CD8-positive, alpha-beta T cell (primary cell): ENCODE measurements at regions of chr9 and their contacts with region 1.

Region 1: GRCh38 chr9:114405294-114406034 is 17.7 kb upstream of the AKNA start:
- DNase-seq: peak; percentile 65 to 91 (median 81)
- ATAC-seq: peak; percentile 99
- H3K4me3 ChIP-seq: no peak overlapping the region
- H3K4me3 Mint-ChIP-seq: no peak overlapping the region
- H3K27ac ChIP-seq: no peak overlapping the region
- H3K27ac Mint-ChIP-seq: peak overlapping the region; percentile 14
- H3K4me1 ChIP-seq: peaks cover 11% of the 10 kb centered on the region
- H3K4me1 Mint-ChIP-seq: peaks cover 7% of the 10 kb centered on the region
- H3K27me3 ChIP-seq: no peaks in the 10 kb centered on the region
- H3K27me3 Mint-ChIP-seq: no peaks in the 10 kb centered on the region
- CTCF ChIP-seq: peak; percentile 64

Region 2: GRCh38 chr9:114378883-114379282 is 26.6 kb before region 1 on chr9:
- CTCF ChIA-PET with region 1: interaction called, 10 read pairs
- POLR2A ChIA-PET with region 1: no interaction called
- intact Hi-C with region 1: no loop called
- DNase-seq: no peak
- ATAC-seq: no peak
- H3K4me3 ChIP-seq: peak overlapping the region in 1 of 2 experiments; percentile 16
- H3K4me3 Mint-ChIP-seq: peak overlapping the region; percentile 68
- H3K27ac ChIP-seq: peak overlapping the region; percentile 31 to 93
- H3K27ac Mint-ChIP-seq: peak overlapping the region; percentile 95
- H3K4me1 ChIP-seq: peaks cover 96% of the 10 kb centered on the region
- H3K4me1 Mint-ChIP-seq: peaks cover 86% of the 10 kb centered on the region
- H3K27me3 ChIP-seq: no peaks in the 10 kb centered on the region
- H3K27me3 Mint-ChIP-seq: no peaks in the 10 kb centered on the region
- CTCF ChIP-seq: no peak

Region 3: DNA sequence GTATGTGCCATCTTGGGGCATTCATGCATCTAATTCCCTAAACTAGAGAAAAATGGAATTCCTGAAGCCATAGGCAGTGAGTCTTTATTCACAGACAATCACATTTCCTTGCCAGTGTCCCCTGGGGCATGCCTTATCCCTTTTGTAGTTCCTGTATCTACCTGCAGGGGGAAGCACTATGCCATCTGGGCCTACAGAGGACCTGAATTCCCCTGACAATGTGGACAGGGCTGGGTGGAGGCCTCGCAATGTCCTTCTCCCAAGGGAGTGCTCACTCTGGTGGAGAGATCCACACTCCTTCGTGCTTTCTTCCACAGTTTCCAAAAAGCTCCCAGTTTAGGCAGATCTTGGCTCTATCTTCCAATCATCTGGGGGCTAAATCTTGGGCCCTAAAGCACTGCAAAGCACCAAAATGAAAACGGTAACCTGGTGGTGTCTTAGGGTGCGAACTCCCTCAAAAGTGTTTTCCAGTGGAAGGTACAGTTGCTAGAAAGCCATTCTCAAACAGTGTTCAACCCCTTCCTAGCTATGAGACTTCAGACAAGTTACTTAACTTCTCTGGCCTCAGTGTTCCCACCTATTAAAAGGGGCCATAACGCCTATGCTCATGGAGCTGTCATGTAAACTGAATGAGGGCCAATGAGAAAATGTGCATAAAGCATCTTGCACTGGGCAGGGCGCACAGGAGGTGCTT is 82.3 kb after region 1 on chr9:
- CTCF ChIA-PET with region 1: interaction called, 24 read pairs
- POLR2A ChIA-PET with region 1: no interaction called
- intact Hi-C with region 1: loop called (anchors 1 to 5 kb)
- DNase-seq: peak; percentile 25 to 83 (median 64)
- ATAC-seq: peak; percentile 85
- H3K4me3 ChIP-seq: no peak overlapping the region
- H3K4me3 Mint-ChIP-seq: no peak overlapping the region
- H3K27ac ChIP-seq: no peak overlapping the region
- H3K27ac Mint-ChIP-seq: no peak overlapping the region
- H3K4me1 ChIP-seq: peaks cover 6% of the 10 kb centered on the region
- H3K4me1 Mint-ChIP-seq: peaks cover 11% of the 10 kb centered on the region
- H3K27me3 ChIP-seq: no peaks in the 10 kb centered on the region
- H3K27me3 Mint-ChIP-seq: no peaks in the 10 kb centered on the region
- CTCF ChIP-seq: peak; percentile 94

Region 4: GRCh38 chr9:114641967-114642366 is 236.5 kb after region 1 on chr9:
- CTCF ChIA-PET with region 1: interaction called, 13 read pairs
- POLR2A ChIA-PET with region 1: no interaction called
- intact Hi-C with region 1: no loop called
- DNase-seq: no peak
- ATAC-seq: no peak
- H3K4me3 ChIP-seq: no peak overlapping the region
- H3K4me3 Mint-ChIP-seq: no peak overlapping the region
- H3K27ac ChIP-seq: no peak overlapping the region
- H3K27ac Mint-ChIP-seq: peak overlapping the region; percentile 69
- H3K4me1 ChIP-seq: no peaks in the 10 kb centered on the region
- H3K4me1 Mint-ChIP-seq: no peaks in the 10 kb centered on the region
- H3K27me3 ChIP-seq: no peaks in the 10 kb centered on the region
- H3K27me3 Mint-ChIP-seq: no peaks in the 10 kb centered on the region
- CTCF ChIP-seq: no peak

Region 5: GRCh38 chr9:114738581-114739316 is 333.3 kb after region 1 on chr9:
- CTCF ChIA-PET with region 1: interaction called, 4 read pairs
- POLR2A ChIA-PET with region 1: interaction called, 3 read pairs
- intact Hi-C with region 1: loop called (anchors 1 to 5 kb)
- DNase-seq: peak; percentile 51 to 85 (median 74)
- ATAC-seq: peak; percentile 80
- H3K4me3 ChIP-seq: no peak overlapping the region
- H3K4me3 Mint-ChIP-seq: no peak overlapping the region
- H3K27ac ChIP-seq: no peak overlapping the region
- H3K27ac Mint-ChIP-seq: peak overlapping the region; percentile 47
- H3K4me1 ChIP-seq: peaks cover 25% of the 10 kb centered on the region
- H3K4me1 Mint-ChIP-seq: peaks cover 40% of the 10 kb centered on the region
- H3K27me3 ChIP-seq: no peaks in the 10 kb centered on the region
- H3K27me3 Mint-ChIP-seq: no peaks in the 10 kb centered on the region
- CTCF ChIP-seq: peak; percentile 92

Region 6: DNA sequence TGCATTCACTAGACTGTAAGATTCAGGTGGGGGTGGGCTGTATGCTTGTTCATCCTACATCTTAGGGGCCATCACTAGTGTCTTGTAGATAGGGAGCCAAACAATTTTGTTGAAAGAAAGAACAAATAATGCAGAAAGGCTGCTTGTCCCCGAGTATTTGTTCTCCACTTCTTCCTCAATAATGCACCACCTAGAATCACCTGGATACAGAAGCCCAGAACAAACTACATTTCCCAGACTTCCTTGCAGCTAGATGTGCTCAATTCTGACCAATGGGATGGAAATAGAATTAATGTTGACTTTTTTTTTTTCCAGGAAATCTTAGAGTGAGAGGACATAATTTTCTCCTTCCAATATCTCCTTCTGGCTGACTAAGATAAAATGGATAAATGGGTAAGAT is 563.8 kb after region 1 on chr9:
- CTCF ChIA-PET with region 1: no interaction called
- POLR2A ChIA-PET with region 1: no interaction called
- intact Hi-C with region 1: no loop called
- DNase-seq: no peak
- ATAC-seq: no peak
- H3K4me3 ChIP-seq: no peak overlapping the region
- H3K4me3 Mint-ChIP-seq: no peak overlapping the region
- H3K27ac ChIP-seq: no peak overlapping the region
- H3K27ac Mint-ChIP-seq: no peak overlapping the region
- H3K4me1 ChIP-seq: peaks cover 15% of the 10 kb centered on the region
- H3K4me1 Mint-ChIP-seq: peaks cover 14% of the 10 kb centered on the region
- H3K27me3 ChIP-seq: no peaks in the 10 kb centered on the region
- H3K27me3 Mint-ChIP-seq: no peaks in the 10 kb centered on the region
- CTCF ChIP-seq: no peak

Region 7: DNA sequence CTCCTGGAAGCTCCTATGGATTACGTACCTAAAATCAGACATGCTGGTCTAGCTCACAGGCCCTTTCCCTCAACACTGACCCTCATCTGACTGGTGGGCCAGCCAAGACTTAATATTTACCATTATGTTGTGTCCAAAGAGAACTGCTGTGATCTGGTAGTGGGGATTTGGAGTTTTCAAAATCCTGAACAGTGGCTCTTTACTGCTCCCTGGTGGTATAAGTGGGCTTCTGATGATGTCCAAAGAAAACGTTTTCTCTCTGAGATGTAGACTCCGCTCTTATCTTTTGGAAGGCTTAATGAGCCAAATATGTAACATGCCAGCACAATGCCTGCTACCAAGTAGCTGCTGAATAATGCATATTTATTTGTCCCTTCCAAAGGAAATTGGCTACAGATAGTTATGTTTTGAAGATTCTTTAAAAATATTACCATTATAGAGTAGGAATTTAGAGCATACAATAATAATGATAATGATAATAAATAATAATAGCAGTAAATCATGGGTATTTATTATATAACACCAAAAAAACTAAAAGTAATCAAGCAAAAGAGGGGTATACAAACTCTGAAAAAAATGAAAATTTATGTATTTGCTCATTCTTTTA is 1119.1 kb after region 1 on chr9:
- CTCF ChIA-PET with region 1: no interaction called
- POLR2A ChIA-PET with region 1: no interaction called
- intact Hi-C with region 1: loop called in 1 of 2 experiments (anchors 5 kb)
- DNase-seq: peak in 2 of 9 experiments; percentile 30 to 39
- ATAC-seq: no peak
- H3K4me3 ChIP-seq: no peak overlapping the region
- H3K4me3 Mint-ChIP-seq: no peak overlapping the region
- H3K27ac ChIP-seq: no peak overlapping the region
- H3K27ac Mint-ChIP-seq: no peak overlapping the region
- H3K4me1 ChIP-seq: no peaks in the 10 kb centered on the region
- H3K4me1 Mint-ChIP-seq: no peaks in the 10 kb centered on the region
- H3K27me3 ChIP-seq: no peaks in the 10 kb centered on the region
- H3K27me3 Mint-ChIP-seq: peaks cover 22% of the 10 kb centered on the region
- CTCF ChIP-seq: peak; percentile 40